ENCODE measurements at regions of chr14 and their contacts with region 1.

Region 1: DNA sequence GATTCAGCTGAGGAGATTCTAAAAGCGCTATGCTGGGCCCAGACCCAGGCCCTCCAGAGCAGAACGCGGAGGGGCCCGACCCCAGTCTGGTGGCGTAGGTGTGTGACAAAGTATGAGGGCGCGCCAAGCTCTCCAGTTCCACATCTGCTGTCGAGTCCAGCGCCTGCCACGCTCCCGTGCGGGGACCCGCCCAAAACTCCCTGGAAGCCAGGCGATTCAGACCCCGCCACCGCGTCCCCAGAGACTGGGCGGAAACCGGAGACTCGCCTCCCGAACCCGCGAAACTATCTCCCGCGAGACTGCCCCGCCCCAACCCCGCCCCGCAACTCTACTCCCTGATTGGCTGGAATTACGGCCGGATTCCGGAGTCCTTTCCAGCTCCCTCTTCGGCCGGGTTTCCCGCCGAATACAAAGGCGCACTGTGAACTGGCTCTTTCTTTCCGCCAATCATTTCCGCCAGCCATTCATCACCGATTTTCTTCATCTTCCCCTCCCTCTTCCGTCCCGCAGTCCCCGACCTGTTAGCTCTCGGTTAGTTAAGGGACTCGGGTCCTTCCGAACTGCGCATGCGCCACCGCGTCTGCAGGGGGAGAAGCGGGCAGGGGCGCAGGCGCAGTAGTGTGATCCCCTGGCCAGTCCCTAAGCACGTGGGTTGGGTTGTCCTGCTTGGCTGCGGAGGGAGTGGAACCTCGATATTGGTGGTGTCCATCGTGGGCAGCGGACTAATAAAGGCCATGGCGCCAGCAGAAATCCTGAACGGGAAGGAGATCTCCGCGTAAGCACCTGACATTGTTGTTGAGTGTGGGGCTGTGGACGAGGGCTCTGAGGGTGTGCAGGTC is at the start of gene MTHFD1:
- DNase-seq: peak; percentile 98
- ATAC-seq: peak; percentile 75
- H3K4me3 ChIP-seq: peak within 1 kb of the TSS; percentile 68 to 93 (median 84)
- H3K4me3 Mint-ChIP-seq: peak within 1 kb of the TSS; percentile 93
- H3K27ac ChIP-seq: peak within 1 kb of the TSS; percentile 75 to 80
- H3K27ac Mint-ChIP-seq: peak within 1 kb of the TSS; percentile 95
- H3K4me1 ChIP-seq: peaks cover 27 to 34% of the 10 kb centered on the region in 2 donors
- H3K4me1 Mint-ChIP-seq: peaks cover 42% of the 10 kb centered on the region
- H3K27me3 ChIP-seq: no peaks in the 10 kb centered on the region
- H3K27me3 Mint-ChIP-seq: no peaks in the 10 kb centered on the region
- CTCF ChIP-seq: no peak
- total RNA-seq, gene MTHFD1: 47.1 and 51.3 TPM in 2 replicates

Region 2: DNA sequence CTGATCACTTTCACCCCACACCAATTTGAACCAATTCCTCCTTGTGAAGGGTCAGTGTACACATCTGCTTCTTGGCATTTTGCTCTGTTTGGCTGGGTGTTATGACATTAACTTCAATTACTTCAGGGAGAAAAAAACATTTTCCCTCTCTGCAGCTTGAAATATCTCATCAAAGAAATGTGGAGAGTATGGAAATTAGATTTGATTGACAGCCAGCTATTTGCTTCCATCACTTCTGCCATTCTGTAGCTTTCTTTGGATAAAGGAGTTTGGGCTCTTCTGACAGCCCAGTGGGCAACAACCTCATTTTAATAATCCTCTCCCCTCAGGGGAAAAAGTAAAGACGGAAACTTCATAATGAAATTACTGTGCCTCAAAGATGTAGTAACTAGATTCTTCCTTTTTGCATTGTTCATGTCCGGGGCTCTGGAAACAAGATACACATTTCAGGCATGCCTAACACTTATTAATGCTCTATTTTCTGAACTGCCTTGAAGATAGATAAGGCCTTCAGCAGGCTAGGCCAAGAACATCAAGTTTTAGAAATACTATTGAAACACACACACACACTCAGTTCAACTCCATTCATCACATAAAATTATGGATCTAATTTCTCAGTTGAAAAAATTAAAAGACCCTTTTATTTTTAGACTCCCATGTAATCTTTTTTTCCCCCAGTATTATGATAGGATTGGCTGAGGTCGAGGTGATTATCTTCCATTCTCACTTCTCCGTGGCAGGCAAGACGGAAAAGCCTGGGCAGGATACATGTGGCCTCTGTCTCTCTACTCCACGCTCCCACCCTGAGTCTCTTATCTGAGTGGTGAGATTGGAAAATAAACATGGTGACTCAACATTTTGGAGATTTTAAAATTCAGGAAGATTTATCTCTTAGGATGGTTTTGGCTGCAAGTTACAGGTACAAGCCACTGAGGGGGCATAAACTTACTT is 1058.9 kb before region 1 on chr14:
- CTCF ChIA-PET with region 1: no interaction called
- POLR2A ChIA-PET with region 1: no interaction called
- intact Hi-C with region 1: no loop called
- DNase-seq: no peak
- ATAC-seq: no peak
- H3K4me3 ChIP-seq: no peak overlapping the region
- H3K4me3 Mint-ChIP-seq: no peak overlapping the region
- H3K27ac ChIP-seq: no peak overlapping the region
- H3K27ac Mint-ChIP-seq: no peak overlapping the region
- H3K4me1 ChIP-seq: no peaks in the 10 kb centered on the region
- H3K4me1 Mint-ChIP-seq: no peaks in the 10 kb centered on the region
- H3K27me3 ChIP-seq: peaks cover 0 to 7% (median 1%) of the 10 kb centered on the region in 4 experiments
- H3K27me3 Mint-ChIP-seq: peaks cover 24% of the 10 kb centered on the region
- CTCF ChIP-seq: no peak

Region 3: DNA sequence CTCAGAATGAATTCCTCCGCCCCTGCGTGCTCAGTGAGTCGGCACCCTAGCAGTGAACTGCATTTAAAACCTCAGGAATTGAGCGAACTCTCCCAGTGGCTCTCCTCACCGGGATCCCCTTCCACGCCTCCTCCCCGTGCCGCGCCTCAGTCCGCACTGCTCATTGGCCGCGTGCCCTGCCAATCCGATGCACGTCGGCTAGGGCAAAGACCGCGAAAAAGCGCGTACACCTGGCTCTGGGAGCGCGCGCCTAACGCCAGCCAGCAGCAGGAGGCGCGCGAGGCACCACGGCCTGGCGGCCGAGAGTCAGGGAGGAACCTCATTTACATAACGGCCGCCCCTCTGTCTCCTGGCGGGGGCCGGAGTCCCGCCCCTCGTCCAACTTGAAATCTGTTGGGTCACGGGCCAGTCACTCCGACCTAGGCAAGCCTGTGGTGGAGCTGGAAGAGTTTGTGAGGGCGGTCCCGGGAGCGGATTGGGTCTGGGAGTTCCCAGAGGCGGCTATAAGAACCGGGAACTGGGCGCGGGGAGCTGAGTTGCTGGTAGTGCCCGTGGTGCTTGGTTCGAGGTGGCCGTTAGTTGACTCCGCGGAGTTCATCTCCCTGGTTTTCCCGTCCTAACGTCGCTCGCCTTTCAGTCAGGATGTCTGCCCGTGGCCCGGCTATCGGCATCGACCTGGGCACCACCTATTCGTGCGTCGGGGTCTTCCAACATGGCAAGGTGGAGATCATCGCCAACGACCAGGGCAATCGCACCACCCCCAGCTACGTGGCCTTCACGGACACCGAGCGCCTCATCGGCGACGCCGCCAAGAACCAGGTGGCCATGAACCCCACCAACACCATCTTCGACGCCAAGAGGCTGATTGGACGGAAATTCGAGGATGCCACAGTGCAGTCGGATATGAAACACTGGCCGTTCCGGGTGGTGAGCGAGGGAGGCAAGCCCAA is 152.6 kb after region 1 on chr14 and contains the start of gene HSPA2:
- CTCF ChIA-PET with region 1: no interaction called
- POLR2A ChIA-PET with region 1: interaction called, 3 read pairs
- intact Hi-C with region 1: loop called (anchors 1 kb)
- DNase-seq: peak; percentile 98
- ATAC-seq: peak; percentile 90
- H3K4me3 ChIP-seq: peak within 1 kb of the TSS; percentile 74 to 98 (median 85)
- H3K4me3 Mint-ChIP-seq: peak within 1 kb of the TSS; percentile 100
- H3K27ac ChIP-seq: peak within 1 kb of the TSS; percentile 60 to 67
- H3K27ac Mint-ChIP-seq: peak within 1 kb of the TSS; percentile 97
- H3K4me1 ChIP-seq: peaks cover 26 to 32% of the 10 kb centered on the region in 2 donors
- H3K4me1 Mint-ChIP-seq: peaks cover 31% of the 10 kb centered on the region
- H3K27me3 ChIP-seq: peaks cover 0 to 19% (median 5%) of the 10 kb centered on the region in 4 experiments
- H3K27me3 Mint-ChIP-seq: peaks cover 5% of the 10 kb centered on the region
- CTCF ChIP-seq: peak; percentile 78
- total RNA-seq, gene HSPA2: 14.9 and 19.6 TPM in 2 replicates